Caco-2 (cell line): ENCODE measurements at regions of chr2 and their contacts with region 1.

Region 1: GRCh38 chr2:14781137-14781536 is 148.6 kb downstream of the LRATD1 start:
- DNase-seq: no peak
- H3K4me3 ChIP-seq: no peak overlapping the region
- H3K4me3 Mint-ChIP-seq: no peak overlapping the region
- H3K27ac Mint-ChIP-seq: no peak overlapping the region
- H3K4me1 ChIP-seq: no peaks in the 10 kb centered on the region
- H3K4me1 Mint-ChIP-seq: no peaks in the 10 kb centered on the region
- H3K27me3 ChIP-seq: no peaks in the 10 kb centered on the region
- H3K27me3 Mint-ChIP-seq: no peaks in the 10 kb centered on the region
- CTCF ChIP-seq: no peak

Region 2: GRCh38 chr2:14632244-14632936 is 148.7 kb before region 1 on chr2 and contains the start of gene LRATD1:
- CTCF ChIA-PET with region 1: no interaction called
- POLR2A ChIA-PET with region 1: no interaction called
- intact Hi-C with region 1: no loop called
- DNase-seq: peak; percentile 83
- H3K4me3 ChIP-seq: peak within 1 kb of the TSS; percentile 34
- H3K4me3 Mint-ChIP-seq: peak within 1 kb of the TSS; percentile 59
- H3K27ac Mint-ChIP-seq: no peak within 1 kb of the TSS
- H3K4me1 ChIP-seq: peaks cover 20% of the 10 kb centered on the region
- H3K4me1 Mint-ChIP-seq: no peaks in the 10 kb centered on the region
- H3K27me3 ChIP-seq: peaks cover 15% of the 10 kb centered on the region
- H3K27me3 Mint-ChIP-seq: peaks cover 26% of the 10 kb centered on the region
- CTCF ChIP-seq: no peak
- total RNA-seq, gene LRATD1: 0.27 and 0.35 TPM in 2 replicates

Region 3: DNA sequence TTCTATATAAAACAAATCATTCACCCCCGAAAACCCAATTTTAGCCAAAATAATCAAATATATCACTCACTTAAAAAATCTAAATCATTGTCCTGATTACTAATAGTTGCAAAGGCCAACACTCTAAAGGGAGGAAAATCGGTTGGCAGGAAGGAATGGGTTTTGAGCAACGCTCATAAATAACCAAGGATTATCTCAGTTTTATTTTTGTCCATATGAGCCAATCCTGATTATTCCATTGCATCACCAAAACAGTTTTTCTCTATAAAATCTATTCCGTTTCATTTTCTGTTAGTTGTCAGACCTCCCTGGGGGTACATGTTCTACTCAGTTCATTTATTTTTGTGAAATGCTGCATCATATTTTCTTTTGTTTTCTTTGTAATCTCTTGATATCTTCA is 25.5 kb after region 1 on chr2:
- CTCF ChIA-PET with region 1: no interaction called
- POLR2A ChIA-PET with region 1: no interaction called
- intact Hi-C with region 1: loop called (anchors 2 kb)
- DNase-seq: no peak
- H3K4me3 ChIP-seq: no peak overlapping the region
- H3K4me3 Mint-ChIP-seq: no peak overlapping the region
- H3K27ac Mint-ChIP-seq: no peak overlapping the region
- H3K4me1 ChIP-seq: no peaks in the 10 kb centered on the region
- H3K4me1 Mint-ChIP-seq: no peaks in the 10 kb centered on the region
- H3K27me3 ChIP-seq: no peaks in the 10 kb centered on the region
- H3K27me3 Mint-ChIP-seq: peaks cover 3% of the 10 kb centered on the region
- CTCF ChIP-seq: no peak

Region 4: DNA sequence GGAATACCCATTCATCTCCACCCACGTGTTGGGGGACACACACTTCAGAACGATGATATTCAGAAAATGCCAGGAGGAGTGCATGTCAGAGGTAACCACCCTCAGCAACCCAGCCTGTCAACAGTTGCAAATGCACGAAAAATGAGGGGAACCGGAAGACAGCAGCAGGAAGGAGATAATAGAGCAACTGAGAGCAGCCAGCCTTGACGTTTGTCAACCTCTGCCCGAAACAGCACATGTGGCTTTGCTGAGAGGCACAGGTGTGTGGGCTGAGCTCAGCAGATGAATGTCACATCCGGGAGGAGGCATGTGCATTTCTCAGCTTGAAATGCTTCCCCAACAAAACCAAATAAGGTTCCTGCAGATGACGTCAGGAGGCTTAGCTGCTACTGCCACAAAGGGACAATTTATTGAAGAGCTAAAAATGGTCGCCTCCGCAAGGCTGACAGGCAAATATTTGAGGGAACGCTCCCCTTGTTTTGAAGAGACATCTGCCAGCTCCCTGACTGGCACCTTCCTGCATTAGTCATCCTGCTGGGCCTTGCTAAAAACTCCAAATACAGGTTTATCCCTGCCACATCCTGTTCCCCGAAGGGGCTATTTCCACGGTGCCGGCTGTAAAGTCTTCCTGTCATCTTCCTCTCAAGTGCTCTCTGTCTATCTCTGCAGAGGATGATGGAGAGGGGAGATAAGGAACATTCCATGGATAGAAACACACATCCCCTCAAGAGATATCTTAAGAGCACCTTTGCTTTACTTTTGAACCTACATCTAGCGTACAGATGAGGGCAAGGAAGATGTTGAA is 361.1 kb after region 1 on chr2:
- CTCF ChIA-PET with region 1: no interaction called
- POLR2A ChIA-PET with region 1: no interaction called
- intact Hi-C with region 1: no loop called
- DNase-seq: no peak
- H3K4me3 ChIP-seq: no peak overlapping the region
- H3K4me3 Mint-ChIP-seq: peak overlapping the region; percentile 18
- H3K27ac Mint-ChIP-seq: no peak overlapping the region
- H3K4me1 ChIP-seq: 0 out of 2 replicates have a peak, but pooled peaks cover 5% of the 10 kb centered on the region
- H3K4me1 Mint-ChIP-seq: no peaks in the 10 kb centered on the region
- H3K27me3 ChIP-seq: no peaks in the 10 kb centered on the region
- H3K27me3 Mint-ChIP-seq: no peaks in the 10 kb centered on the region
- CTCF ChIP-seq: no peak